ENCODE measurements at regions of chr6 and their contacts with region 1.

Region 1: DNA sequence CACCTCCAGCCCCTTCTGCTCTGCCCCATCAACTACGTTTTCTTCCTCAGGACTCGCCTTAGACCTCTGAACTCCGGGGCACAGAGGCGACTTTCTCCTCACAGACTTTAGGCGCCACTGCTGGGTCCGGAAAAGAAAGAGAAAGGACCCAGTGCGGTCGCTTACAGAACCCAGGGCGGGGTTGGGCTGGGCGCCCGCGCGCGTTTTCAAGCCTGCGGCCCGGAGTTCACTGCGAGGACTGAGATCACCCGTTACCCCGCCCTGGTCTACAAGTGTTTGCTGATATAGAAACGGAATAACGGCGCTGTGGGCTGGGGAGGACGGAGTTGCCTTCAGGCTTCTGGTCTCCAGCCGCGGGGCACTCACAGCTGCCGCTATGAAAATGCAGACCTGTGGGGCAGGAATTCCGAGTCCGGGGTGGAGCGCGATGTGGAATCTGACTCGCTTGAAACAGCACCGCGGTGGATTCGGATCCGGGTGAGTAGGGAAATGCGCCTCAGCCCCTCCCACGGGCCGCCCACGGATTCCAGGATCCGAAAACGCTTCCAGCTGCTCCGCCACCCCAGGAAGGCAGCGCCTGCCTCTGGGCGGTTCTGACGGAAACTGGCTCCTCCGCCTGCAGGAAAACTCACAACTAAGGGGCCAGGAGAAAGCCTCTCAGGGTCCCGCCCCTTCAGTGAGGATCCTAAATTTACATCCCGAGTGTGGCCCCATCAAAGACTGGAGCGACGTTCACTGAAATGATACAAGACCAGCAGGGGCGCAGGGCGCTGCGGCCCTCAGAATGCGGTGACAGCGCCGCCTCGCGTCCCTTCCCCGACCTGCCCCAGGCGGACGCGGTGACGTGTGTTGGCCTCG is 29.4 kb downstream of the HLA-F start:
- DNase-seq: peak; percentile 84
- H3K4me3 ChIP-seq: peak overlapping the region; percentile 54 to 55
- H3K27ac ChIP-seq: peak overlapping the region; percentile 84 to 89
- H3K4me1 ChIP-seq: no peaks in the 10 kb centered on the region
- H3K27me3 ChIP-seq: no peaks in the 10 kb centered on the region
- CTCF ChIP-seq: peak; percentile 81 to 95 (median 90)
- POLR2A ChIP-seq: peak; percentile 52

Region 2: DNA sequence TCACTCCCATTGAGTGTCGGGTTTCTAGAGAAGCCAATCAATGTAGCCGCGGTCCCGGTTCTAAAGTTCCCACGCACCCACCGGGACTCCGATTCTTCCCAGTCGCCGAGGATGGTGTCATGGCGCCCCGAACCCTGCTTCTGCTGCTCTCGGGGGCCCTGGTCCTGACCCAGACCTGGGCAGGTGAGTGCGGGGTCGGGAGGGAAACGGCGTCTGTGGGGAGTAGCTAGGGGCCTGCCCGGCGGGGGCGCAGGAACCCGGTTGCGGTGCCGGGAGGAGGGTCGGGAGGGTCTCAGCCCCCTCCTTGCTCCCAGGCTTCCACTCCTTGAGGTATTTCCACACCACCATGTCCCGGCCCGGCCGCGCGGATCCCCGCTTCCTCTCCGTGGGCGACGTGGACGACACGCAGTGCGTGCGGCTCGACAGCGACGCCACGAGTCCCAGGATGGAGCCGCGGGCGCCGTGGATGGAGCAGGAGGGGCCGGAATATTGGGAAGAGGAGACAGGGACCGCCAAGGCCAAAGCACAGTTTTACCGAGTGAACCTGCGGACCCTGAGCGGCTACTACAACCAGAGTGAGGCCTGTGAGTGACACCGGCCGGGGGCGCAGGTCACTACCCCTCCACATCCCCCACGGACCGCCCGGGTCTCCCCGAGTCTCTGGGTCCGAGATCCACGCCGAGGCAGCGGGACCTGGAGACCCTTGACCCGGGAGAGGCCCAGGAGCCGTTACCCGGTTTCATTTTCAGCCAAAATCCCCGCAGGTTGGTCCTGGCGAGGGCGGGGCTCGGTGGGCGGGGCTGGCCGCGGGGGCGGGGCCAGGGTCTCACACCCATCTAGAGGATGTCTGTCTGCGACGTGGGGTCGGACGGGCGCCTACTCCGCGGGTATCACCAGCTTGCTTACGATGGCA is 39.7 kb after region 1 on chr6:
- intact Hi-C with region 1: loop called (anchors 5 kb)
- DNase-seq: peak; percentile 33
- H3K4me3 ChIP-seq: peak overlapping the region; percentile 44 to 58
- H3K27ac ChIP-seq: peak overlapping the region in 1 of 2 donors; percentile 71
- H3K4me1 ChIP-seq: no peaks in the 10 kb centered on the region
- H3K27me3 ChIP-seq: no peaks in the 10 kb centered on the region
- CTCF ChIP-seq: peak in 2 of 4 experiments; percentile 41 to 60
- POLR2A ChIP-seq: peak; percentile 33

Measured in prostate gland (tissue), 2 donors.